ENCODE measurements at regions of chr2 and their contacts with region 1.

Region 1: DNA sequence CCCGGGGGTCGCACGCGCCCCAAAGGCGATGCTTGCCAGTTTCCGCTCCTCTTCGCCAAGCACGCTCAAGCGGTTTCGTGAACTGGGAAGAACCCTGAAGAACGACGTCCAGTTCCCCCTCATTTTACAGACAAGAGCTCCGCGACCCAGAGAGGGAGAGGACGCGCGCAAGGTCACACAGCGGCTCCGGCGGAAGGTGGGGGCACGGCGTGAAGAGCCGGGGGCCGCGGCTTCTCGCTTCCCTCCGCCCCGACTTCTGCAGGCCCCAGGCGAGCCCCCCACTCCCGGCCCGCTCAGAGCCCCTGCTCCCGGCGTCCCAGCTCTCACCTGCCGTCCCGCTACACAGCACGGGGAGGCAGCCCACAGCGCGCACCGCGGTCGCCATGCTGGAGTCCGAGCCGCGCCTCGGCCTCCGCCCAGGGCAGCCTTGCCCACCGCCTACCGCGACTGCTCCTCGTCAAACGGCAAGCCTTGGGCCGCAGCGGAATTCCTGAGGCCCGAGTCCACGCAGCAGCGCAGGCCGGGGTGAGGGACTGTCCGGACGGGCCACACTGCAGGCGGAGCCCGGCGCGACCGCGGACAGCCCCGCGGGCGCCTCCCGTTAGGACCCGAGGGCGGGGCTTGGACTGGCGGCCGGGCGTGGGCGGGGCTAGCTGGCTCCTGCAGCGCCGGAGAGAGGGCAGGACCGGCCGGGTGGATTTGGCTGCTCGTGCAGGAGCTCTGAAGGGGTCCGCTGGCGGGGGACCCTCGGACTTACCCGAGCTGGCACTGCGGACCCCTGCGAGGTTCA is at the start of gene MRPS5:
- DNase-seq: peak; percentile 87
- ATAC-seq: peak; percentile 97
- H3K4me3 Mint-ChIP-seq: peak within 1 kb of the TSS; percentile 96
- H3K27ac Mint-ChIP-seq: peak within 1 kb of the TSS; percentile 96
- H3K4me1 Mint-ChIP-seq: peaks cover 43% of the 10 kb centered on the region
- H3K27me3 Mint-ChIP-seq: peaks cover 3% of the 10 kb centered on the region
- total RNA-seq, gene MRPS5: 79.8 to 83.3 TPM

Region 2: GRCh38 chr2:94874277-94875008 is 247.2 kb before region 1 on chr2:
- CTCF ChIA-PET with region 1: no interaction called
- POLR2A ChIA-PET with region 1: no interaction called
- DNase-seq: peak; percentile 76
- ATAC-seq: peak; percentile 93
- H3K4me3 Mint-ChIP-seq: no peak overlapping the region
- H3K27ac Mint-ChIP-seq: no peak overlapping the region
- H3K4me1 Mint-ChIP-seq: no peaks in the 10 kb centered on the region
- H3K27me3 Mint-ChIP-seq: no peaks in the 10 kb centered on the region

Region 3: DNA sequence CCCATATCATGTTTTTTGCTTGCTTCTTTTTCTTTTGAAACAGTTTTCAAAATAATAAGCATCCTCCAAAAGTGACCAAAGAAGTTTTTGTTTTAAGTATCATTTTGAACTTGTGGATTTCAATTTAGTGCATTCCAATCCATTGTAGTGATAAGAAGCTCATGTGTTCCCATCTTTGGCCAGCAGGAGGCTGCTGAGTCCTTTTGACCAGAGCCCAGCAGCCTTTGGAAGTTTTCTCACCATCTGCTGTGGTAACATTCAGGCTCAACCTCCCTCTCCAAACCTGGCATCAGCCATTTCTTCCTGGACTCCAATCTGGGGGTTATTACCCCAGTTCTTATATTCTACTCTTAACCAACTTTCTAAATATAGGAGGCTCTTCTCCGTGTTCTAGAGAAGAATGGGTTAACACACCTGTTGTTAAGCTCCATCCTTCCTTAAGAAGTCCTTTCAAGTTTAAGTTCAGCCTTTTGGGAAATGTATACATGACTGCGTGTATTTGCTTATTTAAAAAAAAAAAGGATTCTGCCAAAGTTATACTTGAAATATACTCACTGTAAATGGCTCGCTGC is 135.1 kb before region 1 on chr2:
- CTCF ChIA-PET with region 1: interaction called, 10 read pairs
- POLR2A ChIA-PET with region 1: no interaction called
- DNase-seq: peak; percentile 67
- ATAC-seq: peak; percentile 79
- H3K4me3 Mint-ChIP-seq: no peak overlapping the region
- H3K27ac Mint-ChIP-seq: no peak overlapping the region
- H3K4me1 Mint-ChIP-seq: peaks cover 6% of the 10 kb centered on the region
- H3K27me3 Mint-ChIP-seq: peaks cover 10% of the 10 kb centered on the region

Region 4: GRCh38 chr2:95159690-95160449 is 38.3 kb after region 1 on chr2 and contains the start of gene ZNF514:
- CTCF ChIA-PET with region 1: interaction called, 7 read pairs
- POLR2A ChIA-PET with region 1: interaction called, 13 read pairs
- DNase-seq: peak; percentile 81
- ATAC-seq: peak; percentile 93
- H3K4me3 Mint-ChIP-seq: peak within 1 kb of the TSS; percentile 82
- H3K27ac Mint-ChIP-seq: peak within 1 kb of the TSS; percentile 90
- H3K4me1 Mint-ChIP-seq: peaks cover 28% of the 10 kb centered on the region
- H3K27me3 Mint-ChIP-seq: no peaks in the 10 kb centered on the region
- total RNA-seq, gene ZNF514: 16.3 to 17.4 TPM

Region 5: DNA sequence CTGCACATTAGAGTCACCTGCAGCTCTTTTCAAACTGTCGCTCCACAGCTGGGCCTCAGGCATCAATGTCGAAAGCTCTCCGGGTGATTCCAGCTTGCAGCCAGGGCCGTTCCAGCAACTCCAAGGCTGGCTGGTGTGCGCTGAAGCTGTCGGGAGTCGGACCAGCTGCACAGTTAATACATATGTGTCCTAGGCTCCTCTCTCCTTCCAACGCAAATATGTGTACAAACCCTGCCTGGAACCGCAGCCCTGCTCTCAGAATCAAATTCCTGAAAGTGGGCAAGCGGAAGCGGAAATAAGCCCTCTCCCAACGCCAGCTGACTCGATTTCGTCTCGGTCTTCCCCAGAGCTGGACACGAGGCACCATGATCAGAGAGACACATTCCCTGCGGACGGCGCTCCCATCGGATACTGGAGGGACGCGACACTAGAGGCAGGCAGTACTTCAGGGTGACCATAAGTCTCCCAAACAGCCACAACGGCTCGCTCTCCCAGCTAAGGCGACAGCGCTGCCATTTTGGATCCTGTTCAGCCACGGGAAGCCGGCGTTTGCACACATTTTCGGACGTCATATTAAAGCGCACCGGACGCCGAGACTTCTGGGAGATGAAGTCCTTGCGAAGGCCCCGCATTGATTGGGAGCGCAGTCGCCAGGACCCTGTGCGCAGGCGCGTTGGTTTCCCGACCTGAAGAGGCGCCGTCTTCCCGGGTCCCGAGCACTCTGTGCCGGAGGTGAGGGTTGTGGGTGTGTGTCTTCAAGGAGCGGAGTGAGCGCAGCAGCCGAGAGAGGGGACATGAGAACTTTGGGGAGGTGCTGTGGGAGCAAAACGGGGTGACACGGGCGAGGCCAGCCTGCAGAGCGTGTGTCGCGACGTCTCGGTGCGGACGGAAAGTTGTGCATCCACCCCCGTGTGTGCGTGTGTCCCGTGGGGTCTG is 43.8 kb after region 1 on chr2 and contains the start of gene ZNF2:
- CTCF ChIA-PET with region 1: interaction called, 7 read pairs
- POLR2A ChIA-PET with region 1: interaction called, 11 read pairs
- DNase-seq: peak; percentile 98
- ATAC-seq: peak; percentile 98
- H3K4me3 Mint-ChIP-seq: peak within 1 kb of the TSS; percentile 93
- H3K27ac Mint-ChIP-seq: peak within 1 kb of the TSS; percentile 96
- H3K4me1 Mint-ChIP-seq: peaks cover 28% of the 10 kb centered on the region
- H3K27me3 Mint-ChIP-seq: no peaks in the 10 kb centered on the region
- total RNA-seq, gene ZNF2: 4.5 to 5.0 TPM

Measured in activated CD8-positive, alpha-beta T cell treated with anti-CD3 and anti-CD28 coated beads, Interleukin-2, amount 10 ng/mL, durations not matched to agents 7 days and 5 days (primary cell).